Right cardiac atrium (tissue), 5 donors: ENCODE measurements at regions of chr22 and their contacts with region 1.

Region 1: DNA sequence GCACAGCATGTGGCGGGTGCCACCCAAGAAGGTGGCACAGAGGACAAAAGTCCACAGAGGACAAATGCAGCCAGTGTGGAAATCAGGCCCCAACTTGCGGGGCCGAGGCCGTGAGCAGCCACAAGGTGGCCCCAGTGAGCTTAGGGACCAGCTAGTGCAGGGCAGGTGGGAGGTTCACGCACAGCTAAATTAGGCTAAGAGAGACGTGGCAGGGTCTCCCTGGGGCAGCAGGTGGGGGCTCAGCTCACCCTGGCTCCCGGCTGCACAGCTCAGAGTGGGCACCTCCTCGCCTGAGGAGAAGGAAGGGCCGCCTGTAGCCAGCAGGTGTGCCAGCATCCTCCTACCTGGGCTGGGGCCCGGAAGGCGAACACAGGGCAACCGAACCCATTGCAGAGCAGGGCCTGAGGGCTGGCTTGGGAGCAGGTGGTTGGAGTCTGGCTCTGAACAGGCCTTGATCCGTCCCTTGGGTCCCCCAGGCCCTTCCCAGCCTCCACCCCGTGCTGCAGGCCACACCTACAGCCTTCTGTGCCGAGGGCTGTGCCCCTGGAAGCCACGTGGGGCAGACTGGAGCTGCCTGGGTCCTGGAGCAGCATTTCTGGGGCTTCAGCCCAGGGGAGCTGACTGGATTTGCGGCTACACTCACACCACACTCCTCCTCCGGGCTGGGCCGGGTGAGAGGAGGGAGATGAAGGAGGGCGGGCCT is 26.1 kb upstream of the CELSR1 start:
- DNase-seq: peak; percentile 78 to 93 (median 93)
- ATAC-seq: peak; percentile 89 to 90
- H3K4me3 ChIP-seq: no peak overlapping the region
- H3K27ac ChIP-seq: no peak overlapping the region
- H3K4me1 ChIP-seq: peaks cover 3% of the 10 kb centered on the region
- H3K27me3 ChIP-seq: no peaks in the 10 kb centered on the region

Region 2: GRCh38 chr22:46275455-46276122 is 287.9 kb before region 1 on chr22:
- intact Hi-C with region 1: no loop called
- DNase-seq: no peak
- ATAC-seq: no peak
- H3K4me3 ChIP-seq: no peak overlapping the region
- H3K27ac ChIP-seq: no peak overlapping the region
- H3K4me1 ChIP-seq: no peaks in the 10 kb centered on the region
- H3K27me3 ChIP-seq: no peaks in the 10 kb centered on the region

Region 3: GRCh38 chr22:46666577-46667244 is 103.2 kb after region 1 on chr22:
- intact Hi-C with region 1: loop called in 1 of 4 experiments (anchors 5 kb)
- DNase-seq: peak; percentile 9 to 43 (median 25)
- ATAC-seq: no peak
- H3K4me3 ChIP-seq: no peak overlapping the region
- H3K27ac ChIP-seq: no peak overlapping the region
- H3K4me1 ChIP-seq: no peaks in the 10 kb centered on the region
- H3K27me3 ChIP-seq: no peaks in the 10 kb centered on the region

Region 4: DNA sequence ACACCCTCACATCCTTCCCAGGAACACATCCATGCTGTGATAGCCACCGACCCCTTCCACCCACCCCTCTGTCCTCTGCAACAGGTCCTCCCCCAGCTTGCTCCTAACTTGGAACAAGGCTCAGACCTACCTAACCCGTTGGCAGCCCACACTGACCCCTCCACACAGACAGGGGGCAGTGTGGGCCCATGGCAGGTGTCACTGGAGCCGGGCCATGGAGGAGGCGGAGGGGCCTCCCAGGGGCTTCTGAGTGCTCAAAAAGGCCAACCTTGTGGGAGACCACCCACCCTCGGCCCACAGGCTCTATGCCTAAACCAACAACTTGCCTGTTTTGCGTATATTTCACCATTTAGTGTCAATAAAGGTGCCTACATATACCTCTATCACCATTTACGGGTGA is 117.5 kb after region 1 on chr22:
- intact Hi-C with region 1: loop called in 1 of 4 experiments (anchors 5 kb)
- DNase-seq: no peak
- ATAC-seq: no peak
- H3K4me3 ChIP-seq: no peak overlapping the region
- H3K27ac ChIP-seq: no peak overlapping the region
- H3K4me1 ChIP-seq: peaks cover 5% of the 10 kb centered on the region
- H3K27me3 ChIP-seq: no peaks in the 10 kb centered on the region